HEK293 (cell line): ENCODE measurements at regions of chr13 and their contacts with region 1.

Region 1: DNA sequence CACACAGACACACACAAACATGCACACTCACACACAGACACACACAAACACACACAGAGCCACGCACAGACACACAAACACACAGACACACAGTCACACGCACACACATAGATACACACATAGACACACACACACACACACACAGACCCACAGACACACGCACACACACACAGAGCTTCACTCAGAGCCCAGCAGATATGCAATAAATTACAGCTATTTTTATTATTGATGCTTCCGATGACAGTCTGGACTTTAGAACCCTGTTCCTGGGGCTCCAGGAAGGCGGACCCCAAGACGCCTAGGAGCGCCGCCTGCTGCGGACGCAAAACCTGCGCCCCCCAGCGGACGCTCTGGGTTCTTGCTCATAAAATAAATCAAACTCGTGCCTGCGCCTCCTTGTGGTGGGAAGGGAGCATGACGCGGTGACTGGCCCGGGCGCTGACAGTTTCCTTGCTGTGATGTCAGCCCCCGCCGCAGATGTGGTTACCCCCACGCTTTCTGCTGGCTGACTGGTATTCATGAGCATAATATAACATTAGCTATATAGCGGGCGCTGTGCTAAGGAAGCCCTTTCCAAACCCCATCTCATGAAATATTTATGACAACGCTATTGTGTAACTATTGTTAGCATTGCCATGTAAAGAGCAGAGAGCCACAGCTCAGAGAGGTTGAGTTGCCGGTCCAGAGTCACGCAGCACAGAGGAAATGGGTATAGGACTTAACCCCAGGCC is 64.4 kb upstream of the TM9SF2 start:
- H3K4me3 ChIP-seq: no peak overlapping the region
- H3K27ac ChIP-seq: no peak overlapping the region
- H3K4me1 ChIP-seq: no peaks in the 10 kb centered on the region
- CTCF ChIP-seq: peak; percentile 88

Region 2: DNA sequence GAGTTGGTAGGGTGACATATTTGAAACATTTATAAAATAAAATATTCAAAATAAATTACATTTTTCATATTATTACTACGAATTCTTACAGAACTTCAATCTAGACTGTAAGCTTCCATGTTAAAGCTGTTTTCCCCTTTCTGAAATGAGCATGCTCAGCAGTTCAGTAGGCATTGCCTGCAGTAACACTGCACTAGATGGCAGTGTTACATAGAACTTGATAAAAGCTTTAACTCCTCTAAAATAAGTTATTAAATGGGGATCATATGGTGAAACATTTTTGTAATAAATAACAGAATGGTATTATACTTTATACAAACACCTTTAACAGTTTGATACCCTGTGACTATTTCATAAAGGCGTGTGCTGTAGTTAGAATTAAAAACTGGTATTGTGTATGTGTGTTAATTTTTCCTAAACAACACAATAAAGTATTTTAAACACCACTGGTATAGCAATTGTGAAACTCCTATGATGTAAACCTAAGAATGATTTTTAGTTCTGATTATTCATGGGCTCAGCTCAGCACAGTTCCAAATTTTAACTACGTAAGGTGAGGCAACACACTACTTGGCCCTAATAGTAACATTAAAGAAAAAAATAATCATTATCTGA is 167.1 kb before region 1 on chr13:
- CTCF ChIA-PET with region 1: interaction called, 73 read pairs
- POLR2A ChIA-PET with region 1: no interaction called
- H3K4me3 ChIP-seq: no peak overlapping the region
- H3K27ac ChIP-seq: no peak overlapping the region
- H3K4me1 ChIP-seq: no peaks in the 10 kb centered on the region
- CTCF ChIP-seq: no peak

Region 3: DNA sequence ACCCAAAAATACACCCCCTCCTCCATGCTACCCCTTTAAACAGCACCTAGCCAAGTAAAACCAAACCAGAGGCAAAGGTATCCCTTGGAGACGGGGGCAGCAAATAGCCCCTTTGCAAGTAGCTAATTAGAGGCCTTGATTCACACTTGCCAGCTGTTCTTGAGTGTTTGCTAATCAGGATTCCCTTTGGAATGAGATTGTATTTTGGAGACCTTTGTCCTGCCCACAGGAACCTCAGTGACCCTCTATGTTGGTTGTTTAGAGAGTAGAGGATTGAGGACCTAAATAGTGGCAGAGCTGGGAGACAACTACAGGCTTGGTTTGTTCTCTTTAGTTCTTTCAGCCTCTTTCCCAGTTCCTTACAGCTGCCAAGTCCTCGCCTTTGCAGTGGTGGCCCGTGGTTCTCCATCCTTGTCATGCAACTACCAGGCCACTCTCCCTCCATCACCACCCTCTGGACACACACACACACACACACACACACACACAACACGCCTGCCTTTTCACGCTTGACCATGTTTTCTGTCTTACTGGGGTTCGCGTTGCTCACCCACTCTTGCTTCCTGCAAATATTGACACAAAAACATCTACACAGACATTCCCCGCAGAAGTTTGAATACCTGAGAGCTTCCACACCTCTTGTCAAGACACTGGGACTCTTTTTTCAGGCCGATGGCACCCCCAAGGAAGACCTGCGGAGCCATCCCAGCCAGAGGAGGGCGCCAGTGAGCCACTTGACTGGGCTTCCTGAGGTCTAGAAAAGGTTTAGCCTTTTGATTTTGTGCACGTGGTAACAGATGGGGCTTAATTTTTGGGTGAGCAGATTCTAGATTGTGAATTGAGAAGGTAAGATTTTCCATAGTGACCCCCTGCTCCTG is 49.7 kb before region 1 on chr13:
- CTCF ChIA-PET with region 1: interaction called, 33 read pairs
- POLR2A ChIA-PET with region 1: no interaction called
- H3K4me3 ChIP-seq: no peak overlapping the region
- H3K27ac ChIP-seq: no peak overlapping the region
- H3K4me1 ChIP-seq: no peaks in the 10 kb centered on the region
- CTCF ChIP-seq: no peak

Region 4: DNA sequence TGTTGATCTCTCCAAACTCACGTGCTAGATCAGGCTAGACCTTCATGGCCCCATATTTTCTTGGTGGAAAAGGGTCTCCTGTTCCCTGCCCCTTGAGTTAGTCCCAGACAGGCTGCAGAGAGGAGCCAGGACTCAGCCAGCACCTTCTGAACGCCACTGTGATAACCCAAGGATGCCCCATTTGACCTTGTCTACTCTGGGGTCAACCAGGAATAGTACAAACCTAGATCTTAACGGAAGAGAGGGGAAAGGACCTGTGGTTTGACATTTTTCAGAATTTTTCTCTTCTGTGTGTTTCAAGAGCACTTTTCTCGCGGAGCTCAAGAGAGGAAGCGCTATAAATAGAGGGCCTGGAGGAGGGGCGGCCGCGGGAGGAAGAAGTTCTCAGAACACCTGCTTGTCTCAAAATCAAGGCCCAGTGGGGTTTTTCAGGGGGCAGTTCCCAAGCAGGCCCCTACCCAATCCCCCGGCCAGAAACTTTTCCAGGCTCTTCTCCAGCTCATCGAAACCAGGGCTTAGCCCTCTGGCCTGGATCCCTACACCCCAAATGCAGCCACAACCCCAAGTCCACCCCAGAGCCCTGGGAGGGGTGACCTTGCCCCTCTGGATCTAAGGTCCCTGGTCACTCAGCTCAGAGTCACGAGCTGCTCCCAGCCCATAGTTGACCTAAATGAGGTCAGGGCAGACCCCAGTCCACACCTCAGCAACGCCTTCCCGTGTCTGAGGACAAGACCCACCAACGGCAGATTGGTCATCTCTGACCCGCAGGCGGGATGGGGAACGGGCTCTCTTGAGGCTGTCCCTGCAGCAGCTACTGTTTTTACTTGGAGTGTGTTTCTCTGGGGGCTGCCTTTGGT is 11.1 kb before region 1 on chr13:
- CTCF ChIA-PET with region 1: interaction called, 26 read pairs
- POLR2A ChIA-PET with region 1: no interaction called
- H3K4me3 ChIP-seq: no peak overlapping the region
- H3K27ac ChIP-seq: no peak overlapping the region
- H3K4me1 ChIP-seq: no peaks in the 10 kb centered on the region
- CTCF ChIP-seq: no peak